Activated CD4-positive, alpha-beta T cell treated with anti-CD3 and anti-CD28 coated beads for 36 hours (primary cell): ENCODE measurements at regions of chr5 and their contacts with region 1.

Region 1: GRCh38 chr5:178120868-178121357 is 7.6 kb downstream of the N4BP3 start:
- DNase-seq: peak; percentile 94
- ATAC-seq: peak; percentile 94
- H3K4me3 Mint-ChIP-seq: no peak overlapping the region
- H3K27ac Mint-ChIP-seq: no peak overlapping the region
- H3K4me1 Mint-ChIP-seq: peaks cover 22% of the 10 kb centered on the region
- H3K27me3 Mint-ChIP-seq: no peaks in the 10 kb centered on the region

Region 2: DNA sequence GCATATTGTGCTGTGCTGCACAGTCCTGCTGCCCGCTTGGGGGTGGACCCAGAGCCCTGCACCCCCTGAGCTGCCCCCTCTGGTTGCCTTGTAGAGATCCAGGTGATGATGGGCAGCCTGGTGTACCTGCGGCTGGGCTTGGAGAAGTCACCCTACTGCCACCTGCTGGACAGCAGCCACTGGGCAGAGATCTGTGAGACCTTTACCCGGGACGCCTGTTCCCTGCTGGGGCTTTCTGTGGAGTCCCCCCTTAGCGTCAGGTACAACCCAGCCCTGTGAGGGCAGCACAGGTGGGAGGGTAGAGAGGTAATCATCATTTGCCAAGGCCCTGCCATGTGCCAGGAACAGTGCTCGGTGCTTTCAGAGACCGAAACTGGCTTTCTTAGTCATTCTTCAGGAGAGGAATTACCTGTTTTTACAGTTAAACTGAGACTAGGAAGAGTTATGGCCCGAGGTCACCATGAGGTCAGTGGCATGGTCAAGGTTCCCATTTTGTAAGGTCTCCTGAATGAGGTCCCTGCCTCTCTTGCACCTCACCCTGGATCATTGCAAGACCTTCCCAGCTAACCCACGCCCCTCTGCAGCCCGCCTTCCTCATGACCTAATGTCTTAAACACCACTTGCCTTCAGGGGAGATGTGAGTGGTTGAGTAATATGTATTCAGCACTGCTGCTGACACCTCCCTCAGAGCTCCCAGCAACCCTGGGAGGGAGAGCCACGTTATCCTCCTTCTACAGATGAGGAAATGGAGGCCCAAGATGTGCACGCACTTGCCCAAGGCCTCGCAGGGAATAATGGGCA is 25.3 kb after region 1 on chr5:
- CTCF ChIA-PET with region 1: interaction called, 17 read pairs
- POLR2A ChIA-PET with region 1: interaction called, 4 read pairs
- intact Hi-C with region 1: loop called in 1 of 2 experiments (anchors 2 kb)
- DNase-seq: peak; percentile 83
- ATAC-seq: peak; percentile 73
- H3K4me3 Mint-ChIP-seq: no peak overlapping the region
- H3K27ac Mint-ChIP-seq: peak overlapping the region; percentile 58
- H3K4me1 Mint-ChIP-seq: peaks cover 35% of the 10 kb centered on the region
- H3K27me3 Mint-ChIP-seq: no peaks in the 10 kb centered on the region

Region 3: GRCh38 chr5:178163772-178164735 is 43.1 kb after region 1 on chr5:
- CTCF ChIA-PET with region 1: interaction called, 5 read pairs
- POLR2A ChIA-PET with region 1: no interaction called
- intact Hi-C with region 1: loop called in 1 of 2 experiments (anchors 1 kb)
- DNase-seq: peak; percentile 95
- ATAC-seq: peak; percentile 99
- H3K4me3 Mint-ChIP-seq: peak overlapping the region; percentile 20
- H3K27ac Mint-ChIP-seq: no peak overlapping the region
- H3K4me1 Mint-ChIP-seq: peaks cover 3% of the 10 kb centered on the region
- H3K27me3 Mint-ChIP-seq: peaks cover 23% of the 10 kb centered on the region

Region 4: DNA sequence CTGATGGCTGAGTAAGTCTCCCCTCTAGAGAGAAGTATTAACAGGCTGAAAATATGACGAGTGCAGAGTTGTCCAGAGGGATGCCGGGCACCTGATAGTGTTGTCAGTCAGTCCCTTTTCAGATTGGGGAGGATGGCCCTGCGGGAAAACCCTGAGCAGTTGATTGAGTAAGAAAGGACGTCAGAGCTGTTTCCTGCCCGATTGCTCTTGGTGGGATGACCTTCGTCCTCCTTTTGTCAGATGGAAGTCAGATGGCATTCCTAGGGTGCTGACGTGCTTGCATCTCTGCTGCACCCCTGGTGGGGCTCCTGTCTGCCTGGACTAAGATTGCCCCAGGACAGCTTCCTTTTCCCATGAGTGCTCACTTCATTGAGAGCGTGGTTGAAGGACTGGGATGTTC is 748.7 kb after region 1 on chr5:
- CTCF ChIA-PET with region 1: no interaction called
- POLR2A ChIA-PET with region 1: no interaction called
- intact Hi-C with region 1: no loop called
- DNase-seq: no peak
- ATAC-seq: no peak
- H3K4me3 Mint-ChIP-seq: no peak overlapping the region
- H3K27ac Mint-ChIP-seq: no peak overlapping the region
- H3K4me1 Mint-ChIP-seq: peaks cover 5% of the 10 kb centered on the region
- H3K27me3 Mint-ChIP-seq: no peaks in the 10 kb centered on the region